ENCODE measurements at regions of chr19 and their contacts with region 1.

Region 1: DNA sequence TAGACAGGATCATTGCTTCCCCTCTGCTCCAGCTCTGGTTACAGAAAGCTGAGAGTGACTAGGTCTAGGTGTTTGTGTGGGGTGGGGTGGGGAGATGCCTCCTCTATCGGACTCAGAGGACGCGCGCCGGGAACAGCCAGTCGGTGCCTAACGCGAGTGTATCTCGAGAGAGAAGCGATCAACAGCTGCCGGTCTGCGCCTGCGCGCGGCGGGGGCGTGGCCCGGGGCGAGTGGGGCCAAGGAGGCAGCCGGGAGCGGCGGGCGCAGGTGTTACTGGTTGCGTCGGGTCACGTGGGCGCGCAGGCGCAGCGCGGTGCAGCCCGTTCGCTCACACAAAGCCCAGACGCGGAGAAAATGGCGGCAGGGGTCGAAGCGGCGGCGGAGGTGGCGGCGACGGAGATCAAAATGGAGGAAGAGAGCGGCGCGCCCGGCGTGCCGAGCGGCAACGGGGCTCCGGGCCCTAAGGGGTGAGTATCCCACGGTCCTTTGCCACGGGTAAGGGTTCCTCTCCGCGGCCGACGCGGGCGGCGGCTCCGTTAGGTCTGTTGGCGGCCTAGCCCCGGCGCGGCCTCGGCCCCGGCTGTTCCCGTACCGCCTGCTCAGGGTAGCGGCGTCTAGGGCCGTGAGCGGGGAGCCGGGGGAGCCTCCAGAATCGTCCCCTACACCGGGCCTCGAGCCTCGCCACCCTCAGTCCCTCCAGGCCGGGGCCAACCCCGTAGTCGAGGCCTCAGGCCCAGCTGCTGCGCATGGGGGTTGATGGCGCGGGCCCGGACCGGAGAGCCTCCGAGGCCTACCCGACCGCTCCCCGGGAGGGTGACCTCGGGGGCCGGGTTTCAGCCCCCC is at the start of gene HNRNPM:
- DNase-seq: peak; percentile 100
- H3K4me3 Mint-ChIP-seq: peak within 1 kb of the TSS; percentile 90
- H3K27ac Mint-ChIP-seq: peak within 1 kb of the TSS; percentile 98
- H3K4me1 Mint-ChIP-seq: peaks cover 36% of the 10 kb centered on the region
- H3K27me3 Mint-ChIP-seq: no peaks in the 10 kb centered on the region
- total RNA-seq, gene HNRNPM: 237 to 238 TPM

Region 2: GRCh38 chr19:8412783-8413628 is 31.9 kb before region 1 on chr19 and contains the start of gene MARCHF2:
- CTCF ChIA-PET with region 1: interaction called, 43 read pairs
- POLR2A ChIA-PET with region 1: interaction called, 16 read pairs
- intact Hi-C with region 1: loop called (anchors 1 kb)
- DNase-seq: peak; percentile 98
- H3K4me3 Mint-ChIP-seq: peak within 1 kb of the TSS; percentile 67
- H3K27ac Mint-ChIP-seq: no peak within 1 kb of the TSS
- H3K4me1 Mint-ChIP-seq: peaks cover 11% of the 10 kb centered on the region
- H3K27me3 Mint-ChIP-seq: no peaks in the 10 kb centered on the region
- total RNA-seq, gene MARCHF2: 14.5 to 16.0 TPM

Region 3: GRCh38 chr19:8487137-8487851 is 42.4 kb after region 1 on chr19:
- CTCF ChIA-PET with region 1: interaction called, 5 read pairs
- POLR2A ChIA-PET with region 1: interaction called, 16 read pairs
- intact Hi-C with region 1: no loop called
- DNase-seq: peak; percentile 82
- H3K4me3 Mint-ChIP-seq: no peak overlapping the region
- H3K27ac Mint-ChIP-seq: peak overlapping the region; percentile 94
- H3K4me1 Mint-ChIP-seq: peaks cover 24% of the 10 kb centered on the region
- H3K27me3 Mint-ChIP-seq: no peaks in the 10 kb centered on the region

Region 4: DNA sequence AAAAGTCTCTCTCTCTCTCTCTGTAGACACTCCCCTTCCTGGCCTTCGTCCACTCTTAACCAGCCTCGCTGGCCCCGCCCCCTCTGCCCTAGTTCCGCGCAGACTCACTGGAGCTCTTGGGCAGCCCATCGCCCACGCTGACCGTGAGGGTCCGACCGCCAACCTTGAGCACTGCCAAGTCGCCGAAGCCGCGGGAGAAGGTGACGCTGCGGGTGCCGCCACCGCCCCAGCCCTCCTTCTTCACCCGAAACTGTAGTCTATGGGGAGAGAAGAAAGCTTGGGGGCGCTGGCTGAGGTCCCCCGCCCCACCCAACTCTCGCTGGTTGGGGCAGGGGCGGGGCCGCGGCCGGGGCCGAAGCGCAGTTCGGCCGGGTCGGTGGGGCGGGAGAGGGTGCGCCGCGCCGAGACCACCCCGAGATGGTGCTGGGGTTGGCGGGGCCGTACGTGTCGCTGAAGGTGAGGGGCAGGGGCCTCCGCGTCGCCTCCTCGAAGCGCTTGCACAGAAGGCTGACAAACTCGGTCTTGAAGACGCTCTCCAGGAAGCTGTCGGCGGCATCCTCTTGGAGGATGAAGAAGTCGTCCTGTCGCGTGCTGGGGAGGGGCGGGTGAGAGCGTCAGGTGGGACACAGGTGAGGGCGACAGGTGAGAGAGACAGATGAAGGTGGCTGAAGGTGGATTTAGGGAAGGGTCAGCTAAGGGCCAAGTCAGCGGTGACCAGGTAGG is 81.6 kb after region 1 on chr19:
- CTCF ChIA-PET with region 1: no interaction called
- POLR2A ChIA-PET with region 1: no interaction called
- intact Hi-C with region 1: no loop called
- DNase-seq: no peak
- H3K4me3 Mint-ChIP-seq: no peak overlapping the region
- H3K27ac Mint-ChIP-seq: no peak overlapping the region
- H3K4me1 Mint-ChIP-seq: peaks cover 10% of the 10 kb centered on the region
- H3K27me3 Mint-ChIP-seq: no peaks in the 10 kb centered on the region

Measured in activated CD4-positive, alpha-beta memory T cell treated with anti-CD3 and anti-CD28 coated beads for 36 hours (primary cell).